ENCODE measurements at regions of chr22 and their contacts with region 1.

Region 1: GRCh38 chr22:42444077-42444904 is 12.1 kb upstream of the NFAM1 start:
- DNase-seq: peak; percentile 92
- H3K4me3 Mint-ChIP-seq: peak overlapping the region; percentile 71
- H3K27ac Mint-ChIP-seq: peak overlapping the region; percentile 87
- H3K4me1 Mint-ChIP-seq: peaks cover 32% of the 10 kb centered on the region
- H3K27me3 Mint-ChIP-seq: no peaks in the 10 kb centered on the region

Region 2: DNA sequence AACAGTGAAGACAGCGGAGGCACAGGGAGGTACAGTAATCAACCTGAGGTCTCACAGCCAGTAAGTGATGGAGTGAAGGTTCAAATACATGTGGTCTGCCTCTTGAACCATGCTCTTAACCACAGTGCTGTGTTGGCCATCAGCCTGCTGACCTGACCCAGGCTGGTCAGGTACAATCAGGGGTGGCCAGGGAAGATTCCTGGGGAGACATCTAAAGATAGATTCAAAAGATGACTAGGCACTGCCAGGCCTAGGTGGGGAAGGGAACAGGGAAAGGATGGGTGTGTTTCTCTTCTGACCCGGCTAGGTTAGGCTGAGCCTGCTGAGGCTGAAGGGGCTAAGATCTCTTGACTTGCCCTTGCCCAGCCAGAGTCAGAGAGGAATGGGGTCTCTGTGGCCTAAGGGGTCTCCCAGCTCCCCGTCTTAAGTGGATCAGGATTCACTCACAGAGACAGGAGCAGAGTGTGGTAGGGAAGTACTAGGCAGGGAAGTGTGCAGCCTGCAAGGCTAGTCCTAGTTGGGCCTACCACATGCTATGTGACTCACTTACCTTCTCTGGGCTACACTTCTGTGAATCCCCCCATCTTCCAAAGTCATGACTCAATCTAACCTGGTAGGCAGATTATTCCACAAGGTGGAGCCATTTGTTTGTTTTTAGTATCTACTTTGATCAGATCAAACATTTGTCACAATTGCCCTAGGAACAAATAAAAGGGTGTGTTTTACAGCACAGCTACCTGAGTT is 621.8 kb before region 1 on chr22:
- CTCF ChIA-PET with region 1: no interaction called
- intact Hi-C with region 1: loop called (anchors 5 kb)
- DNase-seq: peak; percentile 65
- H3K4me3 Mint-ChIP-seq: no peak overlapping the region
- H3K27ac Mint-ChIP-seq: peak overlapping the region; percentile 81
- H3K4me1 Mint-ChIP-seq: peaks cover 33% of the 10 kb centered on the region
- H3K27me3 Mint-ChIP-seq: no peaks in the 10 kb centered on the region

Region 3: DNA sequence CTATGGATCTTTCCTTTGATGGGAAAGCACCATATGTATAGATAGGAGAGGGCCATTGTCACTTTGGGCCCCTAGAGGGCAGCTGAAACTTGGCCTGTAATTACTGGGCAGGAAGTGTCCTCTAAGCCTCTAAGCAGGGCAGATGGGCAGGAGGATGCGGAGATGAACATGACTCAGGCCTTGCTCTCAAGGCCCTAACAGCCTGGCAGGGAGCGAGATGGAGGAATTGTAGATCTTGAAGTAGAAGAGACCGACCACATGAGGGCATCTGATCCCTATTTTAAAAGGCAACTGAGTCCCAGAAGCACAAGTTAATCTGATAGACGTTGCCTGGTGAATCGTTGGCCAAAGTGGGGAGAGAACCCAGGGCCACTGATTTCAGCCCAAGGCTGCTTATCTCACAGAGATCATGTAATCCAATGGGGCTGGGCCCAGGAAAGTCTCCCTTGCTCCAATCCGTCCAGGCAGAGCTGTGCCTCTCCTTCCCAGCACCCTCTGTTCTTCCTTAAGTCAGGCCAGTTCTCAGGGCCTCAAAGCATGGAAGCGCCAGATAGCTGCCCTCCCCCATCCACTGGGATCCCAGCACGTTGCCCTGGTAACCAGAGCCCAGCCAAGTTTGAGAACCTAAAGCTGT is 477.6 kb before region 1 on chr22:
- CTCF ChIA-PET with region 1: no interaction called
- intact Hi-C with region 1: loop called (anchors 2 kb)
- DNase-seq: peak; percentile 69
- H3K4me3 Mint-ChIP-seq: no peak overlapping the region
- H3K27ac Mint-ChIP-seq: no peak overlapping the region
- H3K4me1 Mint-ChIP-seq: peaks cover 2% of the 10 kb centered on the region
- H3K27me3 Mint-ChIP-seq: no peaks in the 10 kb centered on the region

Region 4: GRCh38 chr22:42369245-42370041 is 74.8 kb before region 1 on chr22:
- CTCF ChIA-PET with region 1: interaction called, 5 read pairs
- intact Hi-C with region 1: loop called (anchors 5 kb)
- DNase-seq: peak; percentile 88
- H3K4me3 Mint-ChIP-seq: peak overlapping the region; percentile 85
- H3K27ac Mint-ChIP-seq: no peak overlapping the region
- H3K4me1 Mint-ChIP-seq: peaks cover 12% of the 10 kb centered on the region
- H3K27me3 Mint-ChIP-seq: peaks cover 23% of the 10 kb centered on the region

Region 5: DNA sequence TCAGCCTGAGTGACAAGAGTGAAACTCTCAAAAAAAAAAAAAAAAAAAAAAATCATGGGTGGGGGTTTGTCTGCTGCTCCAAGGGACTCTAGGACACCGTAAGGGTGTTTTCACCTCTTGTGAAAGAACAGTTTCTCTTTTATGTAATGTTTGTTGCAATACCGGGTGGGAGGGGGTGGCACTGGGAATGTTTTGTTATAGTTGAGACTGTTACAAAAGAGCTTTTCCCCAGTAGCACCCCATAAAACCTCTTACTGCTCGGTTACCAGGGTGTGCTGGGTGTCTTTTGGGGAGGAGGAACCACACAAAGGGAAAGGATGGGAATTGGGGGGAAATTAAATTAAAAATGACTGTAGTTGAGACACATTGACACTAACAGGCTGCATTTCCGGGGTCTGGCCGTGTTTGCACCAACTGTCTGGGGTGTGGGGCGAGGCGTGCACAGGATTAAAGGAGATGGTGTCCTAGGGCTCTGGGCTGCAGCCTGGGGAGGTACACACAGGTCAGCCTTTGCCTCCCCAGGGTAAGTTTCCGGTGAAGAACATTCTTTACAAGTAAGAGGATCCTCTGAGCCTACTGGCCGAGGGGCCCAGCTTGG is 13.7 kb before region 1 on chr22:
- CTCF ChIA-PET with region 1: no interaction called
- intact Hi-C with region 1: no loop called
- DNase-seq: no peak
- H3K4me3 Mint-ChIP-seq: no peak overlapping the region
- H3K27ac Mint-ChIP-seq: no peak overlapping the region
- H3K4me1 Mint-ChIP-seq: no peaks in the 10 kb centered on the region
- H3K27me3 Mint-ChIP-seq: peaks cover 9% of the 10 kb centered on the region

Region 6: DNA sequence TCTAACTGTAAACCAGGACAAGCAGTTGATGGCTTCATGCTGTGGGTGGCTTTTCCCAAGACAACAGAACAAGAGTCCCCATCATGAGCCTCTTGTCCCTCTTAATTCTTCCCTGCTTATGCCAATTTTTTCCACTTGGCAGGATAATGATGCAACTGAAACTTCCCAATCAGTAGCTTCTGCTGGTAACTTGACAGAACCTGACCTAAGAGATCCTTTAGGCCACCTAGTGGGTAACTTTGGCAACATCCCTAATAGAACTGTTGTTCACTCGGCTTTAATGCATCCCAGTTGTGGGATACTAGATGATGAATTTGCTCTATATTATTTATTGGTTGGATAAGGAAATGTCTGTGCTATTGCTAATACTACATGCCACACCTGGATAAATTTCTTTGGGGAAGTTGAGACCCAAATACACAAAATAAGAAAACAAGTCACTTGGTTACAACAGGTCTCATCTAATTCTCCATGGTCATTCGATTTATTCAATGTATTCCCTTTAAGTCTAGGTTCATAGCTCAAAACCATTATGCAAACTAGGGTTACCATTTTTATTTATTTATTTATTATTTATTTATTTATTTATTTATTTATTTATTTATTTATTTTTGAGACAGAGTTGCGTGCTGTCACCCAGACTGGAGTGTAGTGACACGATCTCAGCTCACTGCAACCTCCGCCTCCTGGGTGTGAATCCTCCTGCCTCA is 29.3 kb after region 1 on chr22:
- CTCF ChIA-PET with region 1: interaction called, 7 read pairs
- intact Hi-C with region 1: loop called (anchors 1 kb)
- DNase-seq: no peak
- H3K4me3 Mint-ChIP-seq: no peak overlapping the region
- H3K27ac Mint-ChIP-seq: no peak overlapping the region
- H3K4me1 Mint-ChIP-seq: peaks cover 5% of the 10 kb centered on the region
- H3K27me3 Mint-ChIP-seq: no peaks in the 10 kb centered on the region

Region 7: DNA sequence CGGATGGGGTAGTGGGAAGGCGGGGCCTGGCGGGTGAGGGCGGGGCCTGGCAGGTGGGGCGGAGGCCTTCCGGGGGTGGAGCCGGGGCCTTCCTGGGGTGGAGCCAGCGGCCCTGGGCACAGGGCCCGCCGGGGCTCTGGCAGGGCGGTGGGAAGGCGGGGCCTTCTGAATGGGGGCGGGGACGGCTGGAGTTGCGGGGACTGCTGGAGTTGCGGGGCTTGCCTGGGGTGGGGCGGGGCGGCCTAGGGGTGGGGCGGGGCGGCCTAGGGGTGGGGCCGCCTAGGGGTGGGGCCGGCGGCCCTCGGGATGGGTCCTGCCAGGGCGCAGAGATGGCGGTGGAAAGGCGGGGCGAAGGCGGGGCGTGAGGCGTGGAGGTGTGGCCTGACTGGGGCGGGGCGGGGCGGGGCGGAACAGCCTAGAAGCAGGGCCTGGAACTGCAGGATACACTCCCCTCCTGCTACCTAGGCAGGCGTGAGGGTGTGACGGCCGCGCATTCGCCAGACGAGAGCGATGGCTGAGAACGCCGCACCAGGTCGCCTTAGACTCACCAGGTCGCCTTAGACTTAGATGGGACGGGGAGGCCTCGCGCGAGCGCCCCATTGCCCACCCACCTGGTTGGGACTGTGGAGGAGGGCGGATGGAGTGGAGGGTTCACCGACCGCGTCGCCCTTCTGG is 56.0 kb after region 1 on chr22:
- CTCF ChIA-PET with region 1: no interaction called
- intact Hi-C with region 1: loop called (anchors 2 kb)
- DNase-seq: peak; percentile 87
- H3K4me3 Mint-ChIP-seq: peak overlapping the region; percentile 39
- H3K27ac Mint-ChIP-seq: no peak overlapping the region
- H3K4me1 Mint-ChIP-seq: peaks cover 8% of the 10 kb centered on the region
- H3K27me3 Mint-ChIP-seq: no peaks in the 10 kb centered on the region

Region 8: GRCh38 chr22:42553475-42554361 is 109.4 kb after region 1 on chr22 and contains the start of gene SERHL2:
- CTCF ChIA-PET with region 1: no interaction called
- intact Hi-C with region 1: loop called (anchors 5 kb)
- DNase-seq: peak; percentile 85
- H3K4me3 Mint-ChIP-seq: peak within 1 kb of the TSS; percentile 71
- H3K27ac Mint-ChIP-seq: no peak within 1 kb of the TSS
- H3K4me1 Mint-ChIP-seq: peaks cover 6% of the 10 kb centered on the region
- H3K27me3 Mint-ChIP-seq: no peaks in the 10 kb centered on the region
- total RNA-seq, gene SERHL2: 0.36 to 1.3 TPM

Region 9: GRCh38 chr22:42688241-42689211 is 244.2 kb after region 1 on chr22:
- CTCF ChIA-PET with region 1: no interaction called
- intact Hi-C with region 1: no loop called
- DNase-seq: no peak
- H3K4me3 Mint-ChIP-seq: no peak overlapping the region
- H3K27ac Mint-ChIP-seq: no peak overlapping the region
- H3K4me1 Mint-ChIP-seq: no peaks in the 10 kb centered on the region
- H3K27me3 Mint-ChIP-seq: no peaks in the 10 kb centered on the region